Ascending aorta (tissue), 2 donors: ENCODE measurements at regions of chr1 and their contacts with region 1.

Region 1: DNA sequence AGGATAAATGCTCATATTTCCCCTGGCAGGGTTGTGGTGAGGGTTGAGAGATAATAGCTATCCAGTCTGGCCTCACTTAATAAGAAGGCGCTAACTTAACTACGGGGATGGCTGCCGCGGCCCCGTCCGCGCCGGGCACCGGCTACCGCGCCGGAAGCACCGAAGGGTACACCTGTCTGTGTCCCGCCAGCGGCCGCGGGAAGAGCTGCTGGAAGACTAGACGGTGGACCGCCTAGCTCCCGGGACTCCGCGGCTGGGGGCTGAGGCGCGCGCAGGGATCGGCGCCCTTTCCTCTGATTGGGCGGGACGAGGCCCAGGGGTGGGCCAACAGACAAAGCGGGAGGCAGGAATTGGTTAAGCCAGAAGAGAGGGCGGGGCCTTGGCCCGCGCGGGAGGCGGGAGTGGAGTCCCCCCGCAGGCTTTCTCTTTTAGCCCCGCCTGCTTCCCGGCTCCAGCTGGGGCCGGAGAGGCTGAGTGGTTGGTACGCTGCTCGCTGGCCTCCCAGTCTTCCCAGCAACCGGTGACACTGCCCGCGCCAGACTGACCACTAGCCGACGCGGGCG is at the start of gene ZNF672:
- DNase-seq: peak; percentile 98 to 100
- H3K4me3 ChIP-seq: peak within 1 kb of the TSS; percentile 83 to 88
- H3K27ac ChIP-seq: peak within 1 kb of the TSS; percentile 100
- H3K4me1 ChIP-seq: peaks cover 0 to 25% of the 10 kb centered on the region in 2 donors
- H3K27me3 ChIP-seq: no peaks in the 10 kb centered on the region
- CTCF ChIP-seq: no peak
- total RNA-seq, gene ZNF672: 30.9 TPM

Region 2: DNA sequence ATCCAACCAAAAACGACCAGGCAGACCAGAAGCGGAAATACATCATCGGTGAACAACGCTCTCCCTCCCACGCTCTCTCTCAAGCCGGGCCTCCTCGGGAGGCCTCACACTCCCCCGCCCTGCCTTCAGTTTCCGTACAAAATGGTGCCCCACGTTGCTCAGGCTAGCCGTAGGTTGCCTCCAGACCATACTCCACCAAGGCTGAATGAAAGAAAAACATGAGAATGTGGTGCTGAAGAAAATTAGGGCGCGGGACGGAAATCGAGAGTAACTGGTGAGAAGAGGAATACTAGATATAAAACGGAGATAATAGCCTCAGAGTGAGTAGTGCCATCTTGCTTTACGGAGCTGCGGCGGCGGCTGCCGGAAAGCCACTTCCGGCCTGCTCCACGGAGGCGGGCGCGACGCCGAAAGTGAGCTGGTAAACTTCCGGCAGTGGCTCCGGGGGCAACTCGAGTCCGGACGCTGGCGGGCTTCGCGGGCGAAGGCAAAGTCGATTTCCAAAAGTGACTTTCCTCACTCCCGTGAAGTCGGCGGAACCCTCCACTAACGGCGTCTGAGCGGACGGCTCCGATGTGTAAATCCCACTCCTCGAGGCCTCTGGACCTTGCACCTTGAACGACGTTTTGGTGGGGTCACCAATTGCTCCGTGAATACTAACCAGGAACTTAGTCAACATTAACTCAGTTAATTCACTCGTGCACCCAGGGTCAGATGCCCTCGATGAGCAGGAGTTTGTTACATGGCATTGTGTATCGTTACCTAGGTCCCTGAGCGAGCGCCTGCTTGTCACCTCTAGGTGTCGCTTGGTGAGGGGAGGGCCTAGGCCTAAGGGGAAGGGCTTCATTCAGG is 11.7 kb before region 1 on chr1 and contains the start of gene SH3BP5L:
- intact Hi-C with region 1: loop called (anchors 1 kb)
- DNase-seq: peak; percentile 68 to 95
- H3K4me3 ChIP-seq: peak within 1 kb of the TSS; percentile 80 to 90
- H3K27ac ChIP-seq: peak within 1 kb of the TSS; percentile 88 to 93
- H3K4me1 ChIP-seq: peaks cover 18 to 45% of the 10 kb centered on the region in 2 donors
- H3K27me3 ChIP-seq: no peaks in the 10 kb centered on the region
- CTCF ChIP-seq: peak; percentile 43 to 70 (median 57)
- total RNA-seq, gene SH3BP5L: 15.9 TPM

Region 3: GRCh38 chr1:248858891-248859889 is 21.3 kb after region 1 on chr1 and contains the start of gene ZNF692:
- intact Hi-C with region 1: loop called (anchors 1 kb)
- DNase-seq: peak; percentile 86 to 99
- H3K4me3 ChIP-seq: peak within 1 kb of the TSS; percentile 69
- H3K27ac ChIP-seq: peak within 1 kb of the TSS; percentile 83 to 90
- H3K4me1 ChIP-seq: peaks cover 11 to 25% of the 10 kb centered on the region in 2 donors
- H3K27me3 ChIP-seq: no peaks in the 10 kb centered on the region
- CTCF ChIP-seq: no peak
- total RNA-seq, gene ZNF692: 13.8 TPM

Region 4: DNA sequence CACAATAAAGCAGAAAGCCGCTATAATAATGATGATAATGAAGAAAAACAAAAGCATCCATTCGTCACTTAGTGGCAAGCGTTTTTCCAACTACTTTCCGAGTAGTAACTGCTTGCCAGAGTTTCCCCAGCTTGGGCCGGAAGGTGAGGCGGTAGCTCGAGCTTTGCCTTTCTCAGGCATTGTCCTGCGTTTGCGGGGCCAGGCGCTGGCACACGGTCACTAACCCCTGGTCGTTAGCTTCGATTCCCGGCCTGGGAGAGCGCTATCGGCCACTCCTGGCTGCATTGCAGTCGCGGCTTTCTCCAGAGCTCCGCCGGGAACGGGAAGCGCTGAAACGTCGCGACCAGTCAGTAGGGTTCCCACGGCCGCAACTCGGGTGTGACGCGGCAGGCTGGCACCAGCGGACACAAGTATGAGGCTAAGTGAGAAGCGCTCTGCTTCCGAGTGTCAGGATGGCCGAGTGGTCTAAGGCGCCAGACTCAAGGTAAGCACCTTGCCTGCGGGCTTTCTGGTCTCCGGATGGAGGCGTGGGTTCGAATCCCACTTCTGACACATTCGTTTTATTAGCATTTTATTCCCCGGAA is 35.6 kb after region 1 on chr1:
- intact Hi-C with region 1: loop called (anchors 1 kb)
- DNase-seq: peak; percentile 86 to 98
- H3K4me3 ChIP-seq: peak overlapping the region; percentile 70 to 79
- H3K27ac ChIP-seq: peak overlapping the region; percentile 97 to 99
- H3K4me1 ChIP-seq: no peaks in the 10 kb centered on the region
- H3K27me3 ChIP-seq: no peaks in the 10 kb centered on the region
- CTCF ChIP-seq: no peak

Region 5: GRCh38 chr1:248906009-248906752 is 68.3 kb after region 1 on chr1 and contains the start of gene PGBD2:
- intact Hi-C with region 1: loop called (anchors 1 kb)
- DNase-seq: peak; percentile 45 to 94
- H3K4me3 ChIP-seq: peak within 1 kb of the TSS; percentile 71 to 75
- H3K27ac ChIP-seq: peak within 1 kb of the TSS; percentile 82 to 95
- H3K4me1 ChIP-seq: peaks cover 0 to 6% of the 10 kb centered on the region in 2 donors
- H3K27me3 ChIP-seq: no peaks in the 10 kb centered on the region
- CTCF ChIP-seq: peak; percentile 48 to 64 (median 61)
- total RNA-seq, gene PGBD2: 0.53 TPM